ENCODE measurements at regions of chr11 and their contacts with region 1.

Region 1: DNA sequence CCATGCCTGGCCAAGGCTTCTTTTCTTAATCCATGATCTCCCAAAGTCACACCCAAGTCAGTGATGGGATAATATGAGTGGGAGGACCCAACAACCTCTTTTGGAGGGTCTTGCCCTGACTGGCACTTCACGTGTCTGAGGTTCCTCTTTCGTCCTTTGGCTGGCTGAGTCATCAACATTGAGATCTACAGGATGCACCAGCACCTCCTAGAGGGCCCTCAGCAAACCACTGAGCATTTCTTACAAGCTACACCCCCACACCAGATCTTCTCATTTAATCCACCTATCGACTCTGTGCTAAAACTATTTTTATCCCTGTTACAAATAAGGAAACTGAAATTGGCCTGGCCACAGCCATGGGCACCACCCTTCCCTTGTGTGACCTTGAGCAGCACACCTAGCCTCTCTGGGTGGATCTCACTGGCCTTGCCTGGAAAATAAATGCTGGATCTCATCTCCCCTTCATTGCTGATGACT is 63.4 kb downstream of the FLI1 start:
- DNase-seq: peak; percentile 79
- H3K4me3 Mint-ChIP-seq: no peak overlapping the region
- H3K27ac Mint-ChIP-seq: peak overlapping the region; percentile 80
- H3K4me1 Mint-ChIP-seq: peaks cover 77% of the 10 kb centered on the region
- H3K27me3 Mint-ChIP-seq: no peaks in the 10 kb centered on the region

Region 2: DNA sequence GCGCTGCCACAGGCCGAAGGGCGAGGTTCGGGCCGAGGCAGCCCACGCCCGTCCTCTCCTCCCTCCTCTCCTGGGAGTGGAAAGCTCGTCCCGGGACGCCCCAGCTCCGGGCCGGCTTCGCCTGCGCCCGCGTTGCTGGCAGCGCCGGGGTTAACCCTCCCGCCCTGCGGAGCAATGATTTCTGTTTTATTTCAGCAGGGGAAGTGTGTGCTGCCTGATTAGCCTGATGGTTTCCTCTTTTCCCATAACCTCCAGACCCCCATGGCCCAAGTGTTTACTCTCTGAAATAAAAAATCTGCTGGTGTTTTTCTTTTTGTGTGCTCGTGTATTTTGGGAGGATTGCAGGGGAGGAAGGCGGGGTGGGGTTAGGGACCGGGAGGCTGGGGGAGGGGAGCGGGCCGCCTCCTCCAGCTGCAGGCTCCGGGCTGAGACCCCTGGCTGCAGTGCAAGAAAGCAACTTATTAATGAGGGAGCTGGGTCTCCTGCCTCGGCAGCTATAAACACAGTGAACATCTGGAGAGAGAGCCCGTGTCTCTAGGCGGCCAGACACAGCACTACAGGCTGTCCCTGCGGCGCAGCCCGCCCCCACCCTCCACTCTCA is 208.5 kb before region 1 on chr11:
- CTCF ChIA-PET with region 1: no interaction called
- DNase-seq: peak; percentile 45
- H3K4me3 Mint-ChIP-seq: peak overlapping the region; percentile 67
- H3K27ac Mint-ChIP-seq: peak overlapping the region; percentile 61
- H3K4me1 Mint-ChIP-seq: peaks cover 91% of the 10 kb centered on the region
- H3K27me3 Mint-ChIP-seq: peaks cover 4% of the 10 kb centered on the region

Region 3: DNA sequence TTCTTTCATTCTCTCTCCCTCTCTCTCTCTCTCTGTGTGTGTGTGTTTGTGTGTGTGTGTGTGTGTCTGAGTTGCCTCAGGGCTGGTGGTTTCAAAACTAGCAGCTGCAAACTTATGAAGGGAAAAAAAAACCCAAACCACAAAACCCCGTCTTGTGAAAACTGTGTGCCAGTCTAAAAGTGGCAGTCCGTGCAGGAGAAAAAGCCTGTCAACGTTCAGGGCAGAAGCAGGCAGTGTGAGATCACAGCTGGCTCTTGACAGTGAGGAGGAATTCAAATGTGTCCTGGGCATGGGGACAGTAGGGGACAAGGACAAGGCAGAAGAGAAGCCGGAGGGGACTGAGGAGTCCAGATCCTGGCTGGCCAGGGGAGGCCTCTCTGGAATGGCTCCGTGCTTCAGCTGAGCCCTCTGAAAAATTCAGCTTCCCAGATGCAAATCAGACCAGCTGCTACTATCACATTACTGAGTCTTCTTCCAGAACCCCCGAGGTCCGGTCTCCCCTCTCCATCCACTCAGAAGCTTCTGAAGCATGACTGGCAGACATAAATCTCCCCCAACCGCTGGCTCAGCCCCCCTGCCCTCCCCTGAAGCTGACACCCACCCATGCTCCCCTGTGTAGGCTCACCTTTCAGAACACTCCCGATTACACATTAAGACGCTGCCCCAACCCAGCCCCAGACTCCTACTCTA is 31.5 kb before region 1 on chr11:
- CTCF ChIA-PET with region 1: interaction called, 12 read pairs
- DNase-seq: peak; percentile 76
- H3K4me3 Mint-ChIP-seq: peak overlapping the region; percentile 76
- H3K27ac Mint-ChIP-seq: peak overlapping the region; percentile 97
- H3K4me1 Mint-ChIP-seq: peaks cover 99% of the 10 kb centered on the region
- H3K27me3 Mint-ChIP-seq: no peaks in the 10 kb centered on the region

Region 4: GRCh38 chr11:128733440-128734102 is 23.7 kb before region 1 on chr11:
- CTCF ChIA-PET with region 1: interaction called, 12 read pairs
- DNase-seq: peak; percentile 69
- H3K4me3 Mint-ChIP-seq: peak overlapping the region; percentile 69
- H3K27ac Mint-ChIP-seq: peak overlapping the region; percentile 97
- H3K4me1 Mint-ChIP-seq: peaks cover 100% of the 10 kb centered on the region
- H3K27me3 Mint-ChIP-seq: no peaks in the 10 kb centered on the region

Measured in activated naive CD4-positive, alpha-beta T cell treated with anti-CD3 and anti-CD28 coated beads, Interleukin-2, amount 10 ng/mL, durations not matched to agents 7 days and 5 days (primary cell).